ENCODE measurements at regions of chr3 and their contacts with region 1.

Region 1: GRCh38 chr3:134231131-134231530 is 19.5 kb downstream of the RYK start:
- DNase-seq: no peak

Region 2: GRCh38 chr3:134244921-134245320 is 13.8 kb after region 1 on chr3:
- intact Hi-C with region 1: loop called (anchors 2 kb)
- DNase-seq: no peak